ENCODE measurements at regions of chr1 and their contacts with region 1.

Region 1: DNA sequence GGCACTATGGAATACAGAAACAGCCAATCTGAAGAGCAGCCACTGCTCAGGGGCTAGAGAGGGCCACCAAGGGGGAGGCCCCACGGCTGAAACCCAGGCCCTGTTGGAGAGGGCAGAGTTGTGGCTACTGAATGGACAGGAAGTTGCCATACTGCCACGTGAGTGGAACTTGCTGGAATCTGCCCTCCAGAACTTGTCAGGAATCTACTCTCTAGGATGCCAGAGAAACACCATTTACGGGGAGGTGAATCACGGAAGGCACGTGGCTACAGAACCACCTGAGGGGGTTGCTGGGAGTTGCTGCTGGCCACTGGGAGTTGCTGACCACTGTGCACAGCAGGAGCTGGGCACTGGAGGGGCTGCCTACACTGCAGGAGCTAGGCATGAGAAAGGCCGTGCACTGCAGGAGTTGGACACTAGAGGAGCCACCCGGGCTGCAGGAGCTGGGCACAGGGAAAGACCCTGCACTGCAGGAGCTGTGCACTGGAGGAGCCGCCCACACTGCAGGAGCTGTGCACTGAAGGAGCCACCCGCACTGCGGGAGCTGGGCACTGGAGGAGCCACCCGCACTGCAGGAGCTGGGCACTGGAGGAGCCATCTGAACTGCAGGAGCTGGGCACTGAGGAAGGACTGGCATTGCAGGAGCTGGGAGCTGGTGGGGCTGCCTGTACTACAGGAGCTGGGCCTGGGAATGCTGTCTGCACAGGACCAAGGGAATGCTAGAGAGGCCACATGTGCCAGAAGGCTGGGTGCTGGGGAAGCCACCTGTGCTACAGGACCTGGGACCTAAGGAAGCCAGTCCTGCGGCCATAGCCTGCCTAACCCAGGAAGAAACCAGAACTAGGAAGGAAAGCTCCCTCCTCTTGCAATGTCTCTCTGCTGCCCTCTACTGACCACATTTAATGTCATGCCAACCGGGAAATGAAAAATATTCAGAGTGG is 343.4 kb downstream of the MATN1 start:
- DNase-seq: peak; percentile 64
- ATAC-seq: peak; percentile 93
- H3K4me3 ChIP-seq: no peak overlapping the region
- H3K27ac ChIP-seq: no peak overlapping the region
- H3K4me1 ChIP-seq: no peaks in the 10 kb centered on the region
- H3K27me3 ChIP-seq: peaks cover 3% of the 10 kb centered on the region; the same call in 1 of the 2 replicates
- CTCF ChIP-seq: peak; percentile 87
- POLR2A ChIP-seq: no peak
- RAD21 ChIP-seq: peak; percentile 66

Region 2: DNA sequence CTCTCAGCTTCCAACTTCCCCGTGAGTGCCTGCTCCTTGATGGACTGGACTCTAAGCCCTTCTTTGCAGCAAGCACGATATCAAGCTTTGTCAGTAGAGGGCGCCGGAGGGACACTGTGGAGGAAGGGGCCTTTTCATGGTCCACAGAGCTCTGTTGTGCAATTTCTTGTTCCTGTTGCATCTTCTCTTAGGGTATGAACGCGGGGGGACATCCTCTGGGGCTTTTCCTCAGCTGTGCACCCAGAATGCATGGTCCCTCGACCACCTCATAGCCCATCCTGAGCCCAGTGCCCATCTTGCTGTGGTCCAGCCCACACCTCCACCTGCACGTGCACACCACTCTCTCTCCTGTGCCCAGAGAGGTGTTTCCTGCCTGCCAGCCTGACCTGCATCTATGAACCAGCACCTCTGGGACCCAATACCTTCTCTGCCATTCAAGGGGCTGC is 586.8 kb before region 1 on chr1:
- CTCF ChIA-PET with region 1: interaction called, 5 read pairs
- POLR2A ChIA-PET with region 1: no interaction called
- dilution Hi-C with region 1: no loop called
- in situ Hi-C with region 1: no loop called
- intact Hi-C with region 1: loop called (anchors 1 kb)
- DNase-seq: peak; percentile 72
- ATAC-seq: peak; percentile 98
- H3K4me3 ChIP-seq: no peak overlapping the region
- H3K27ac ChIP-seq: no peak overlapping the region
- H3K4me1 ChIP-seq: no peaks in the 10 kb centered on the region
- H3K27me3 ChIP-seq: no peaks in the 10 kb centered on the region; the same call in 1 of the 2 replicates
- CTCF ChIP-seq: peak; percentile 83
- POLR2A ChIP-seq: no peak
- RAD21 ChIP-seq: peak; percentile 79

Region 3: DNA sequence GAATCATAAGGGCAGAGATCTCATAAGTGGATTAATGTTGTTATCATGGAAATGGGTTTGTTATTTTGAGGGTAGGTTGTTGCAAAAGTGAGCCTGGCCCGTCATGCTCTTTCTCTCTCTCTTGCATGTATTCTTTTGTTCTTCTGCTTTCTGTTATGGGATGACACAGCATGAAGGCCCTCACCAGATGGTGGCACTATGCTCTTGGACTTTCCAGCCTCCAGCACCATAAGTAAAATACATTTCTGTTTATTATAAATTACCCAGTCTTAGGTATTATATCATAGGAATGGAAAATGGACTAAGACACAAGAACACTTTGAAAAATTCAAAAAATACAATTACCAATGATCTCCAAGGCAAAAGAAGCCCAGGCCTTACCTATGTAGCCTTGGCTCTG is 467.5 kb before region 1 on chr1:
- CTCF ChIA-PET with region 1: no interaction called
- POLR2A ChIA-PET with region 1: no interaction called
- dilution Hi-C with region 1: no loop called
- in situ Hi-C with region 1: no loop called
- intact Hi-C with region 1: loop called (anchors 10 kb)
- DNase-seq: peak; percentile 54
- ATAC-seq: no peak; the same call in 1 of the 2 replicates
- H3K4me3 ChIP-seq: no peak overlapping the region
- H3K27ac ChIP-seq: no peak overlapping the region
- H3K4me1 ChIP-seq: no peaks in the 10 kb centered on the region
- H3K27me3 ChIP-seq: no peaks in the 10 kb centered on the region
- CTCF ChIP-seq: peak; percentile 54
- POLR2A ChIP-seq: no peak
- RAD21 ChIP-seq: peak; percentile 56

Region 4: DNA sequence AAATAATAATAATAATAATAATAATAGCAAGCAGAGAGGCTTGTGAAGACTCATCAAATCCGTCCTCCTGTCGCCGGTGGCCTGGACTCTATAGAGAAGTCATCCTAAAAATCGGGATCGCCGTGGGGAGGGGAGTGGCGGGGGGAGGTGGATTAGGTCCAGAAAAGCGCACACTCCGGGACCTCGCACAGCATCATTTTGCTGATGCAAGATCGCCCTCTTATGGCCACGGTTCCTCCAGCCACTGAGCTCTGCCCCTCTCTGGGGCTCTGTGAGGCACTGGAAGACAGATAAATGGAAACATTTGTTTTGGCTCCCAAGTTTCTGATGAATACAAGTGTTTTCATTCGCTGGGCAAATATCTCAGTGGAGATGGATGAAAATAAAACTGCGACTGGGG is 268.5 kb before region 1 on chr1:
- CTCF ChIA-PET with region 1: no interaction called
- POLR2A ChIA-PET with region 1: no interaction called
- dilution Hi-C with region 1: no loop called
- in situ Hi-C with region 1: no loop called
- intact Hi-C with region 1: loop called (anchors 10 kb)
- DNase-seq: peak; percentile 41
- ATAC-seq: peak; percentile 92
- H3K4me3 ChIP-seq: no peak overlapping the region
- H3K27ac ChIP-seq: no peak overlapping the region
- H3K4me1 ChIP-seq: no peaks in the 10 kb centered on the region
- H3K27me3 ChIP-seq: peaks cover 10% of the 10 kb centered on the region
- CTCF ChIP-seq: peak; percentile 72
- POLR2A ChIP-seq: no peak
- RAD21 ChIP-seq: peak; percentile 76

Region 5: GRCh38 chr1:30336550-30337323 is 43.2 kb before region 1 on chr1:
- CTCF ChIA-PET with region 1: no interaction called
- POLR2A ChIA-PET with region 1: no interaction called
- dilution Hi-C with region 1: no loop called
- in situ Hi-C with region 1: no loop called
- intact Hi-C with region 1: no loop called
- DNase-seq: no peak
- ATAC-seq: no peak
- H3K4me3 ChIP-seq: no peak overlapping the region
- H3K27ac ChIP-seq: no peak overlapping the region
- H3K4me1 ChIP-seq: no peaks in the 10 kb centered on the region
- H3K27me3 ChIP-seq: no peaks in the 10 kb centered on the region
- CTCF ChIP-seq: no peak
- POLR2A ChIP-seq: no peak
- RAD21 ChIP-seq: no peak

Region 6: DNA sequence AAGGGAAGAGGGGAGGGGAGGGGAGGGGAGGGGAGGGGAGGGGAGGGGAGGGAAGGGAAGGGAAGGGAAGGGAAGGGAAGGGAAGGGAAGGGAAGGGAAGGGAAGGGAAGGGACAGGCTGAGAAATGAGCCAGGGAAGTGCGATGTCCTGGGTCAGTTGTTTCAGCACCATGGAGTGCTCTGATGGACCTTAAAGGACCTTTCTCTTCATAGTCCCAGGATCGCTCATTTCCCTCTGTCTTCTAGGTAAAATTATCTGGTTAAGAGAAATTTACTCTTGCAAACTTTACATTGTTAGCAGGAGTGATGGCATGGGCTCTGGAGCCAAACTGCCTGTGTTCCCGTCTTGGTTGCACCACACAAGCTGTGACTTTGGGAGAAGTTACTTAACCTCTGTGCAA is 14.4 kb before region 1 on chr1:
- CTCF ChIA-PET with region 1: interaction called, 12 read pairs
- POLR2A ChIA-PET with region 1: no interaction called
- dilution Hi-C with region 1: no loop called
- in situ Hi-C with region 1: no loop called
- intact Hi-C with region 1: no loop called
- DNase-seq: no peak
- ATAC-seq: no peak
- H3K4me3 ChIP-seq: no peak overlapping the region
- H3K27ac ChIP-seq: no peak overlapping the region
- H3K4me1 ChIP-seq: no peaks in the 10 kb centered on the region
- H3K27me3 ChIP-seq: no peaks in the 10 kb centered on the region
- CTCF ChIP-seq: no peak
- POLR2A ChIP-seq: no peak
- RAD21 ChIP-seq: no peak